ENCODE measurements at regions of chr17 and their contacts with region 1.

Region 1: GRCh38 chr17:49223517-49224197 is 6.9 kb downstream of the PHOSPHO1 start:
- DNase-seq: peak; percentile 37 to 84 (median 71)
- ATAC-seq: peak; percentile 19
- H3K4me3 ChIP-seq: peak overlapping the region; percentile 37 to 42
- H3K4me3 Mint-ChIP-seq: peak overlapping the region; percentile 76
- H3K27ac ChIP-seq: no peak overlapping the region
- H3K27ac Mint-ChIP-seq: peak overlapping the region; percentile 66
- H3K4me1 ChIP-seq: peaks cover 53% of the 10 kb centered on the region
- H3K4me1 Mint-ChIP-seq: peaks cover 47% of the 10 kb centered on the region
- H3K27me3 ChIP-seq: no peaks in the 10 kb centered on the region
- H3K27me3 Mint-ChIP-seq: no peaks in the 10 kb centered on the region
- CTCF ChIP-seq: peak; percentile 78

Region 2: DNA sequence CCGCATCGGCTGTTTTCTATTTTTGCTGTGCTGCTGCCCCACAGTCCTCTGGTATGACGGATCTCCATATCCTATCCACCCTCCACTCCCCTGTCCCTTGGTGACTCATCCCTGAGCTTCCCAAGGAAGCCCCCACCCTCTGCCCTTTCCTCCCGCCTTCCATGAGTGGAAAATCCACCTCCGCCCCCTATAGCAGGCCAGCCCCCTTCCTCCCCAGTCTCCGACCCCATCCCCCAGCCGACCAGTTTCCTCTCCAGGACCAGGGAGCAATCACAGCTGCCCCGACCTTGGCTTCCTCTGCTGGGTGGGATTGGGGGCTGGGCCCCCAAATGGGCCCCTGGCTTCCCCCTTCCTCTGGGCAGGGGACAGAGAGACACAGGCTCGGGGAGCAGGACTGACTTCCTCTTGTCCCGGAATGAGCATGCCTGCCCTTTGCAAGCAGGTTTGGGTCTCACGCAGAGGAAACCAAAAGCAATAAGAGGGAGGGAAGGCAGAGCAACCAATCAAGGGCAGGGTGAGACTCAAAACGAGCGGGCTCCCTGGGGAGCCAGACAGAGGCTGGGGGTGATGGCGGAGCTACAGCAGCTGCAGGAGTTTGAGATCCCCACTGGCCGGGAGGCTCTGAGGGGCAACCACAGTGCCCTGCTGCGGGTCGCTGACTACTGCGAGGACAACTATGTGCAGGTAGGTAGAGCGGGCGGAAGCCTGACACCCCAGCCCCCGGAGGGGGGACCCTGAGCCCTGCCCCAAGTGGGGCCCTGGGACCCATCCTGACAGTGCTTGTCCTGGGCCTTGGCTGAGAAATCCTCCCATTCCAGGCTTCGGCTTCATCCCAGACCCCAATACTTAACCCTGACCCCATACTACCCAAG is 13.3 kb before region 1 on chr17 and contains the starts of genes ABI3 and GNGT2:
- CTCF ChIA-PET with region 1: interaction called, 179 read pairs
- POLR2A ChIA-PET with region 1: interaction called, 9 read pairs
- intact Hi-C with region 1: loop called (anchors 1 kb)
- DNase-seq: peak in 7 of 9 experiments; percentile 43 to 86 (median 69)
- ATAC-seq: peak; percentile 80
- H3K4me3 ChIP-seq: peak within 1 kb of the TSS; percentile 86 to 87
- H3K4me3 Mint-ChIP-seq: peak within 1 kb of the TSS; percentile 95
- H3K27ac ChIP-seq: peak within 1 kb of the TSS; percentile 61 to 63
- H3K27ac Mint-ChIP-seq: peak within 1 kb of the TSS; percentile 91
- H3K4me1 ChIP-seq: peaks cover 78% of the 10 kb centered on the region
- H3K4me1 Mint-ChIP-seq: peaks cover 71% of the 10 kb centered on the region
- H3K27me3 ChIP-seq: no peaks in the 10 kb centered on the region
- H3K27me3 Mint-ChIP-seq: no peaks in the 10 kb centered on the region
- CTCF ChIP-seq: no peak
- total RNA-seq, gene ABI3: 12.8 to 13.6 TPM
- total RNA-seq, gene GNGT2: 3.7 to 4.1 TPM

Region 3: GRCh38 chr17:49260011-49260921 is 36.6 kb after region 1 on chr17:
- CTCF ChIA-PET with region 1: no interaction called
- POLR2A ChIA-PET with region 1: no interaction called
- intact Hi-C with region 1: no loop called
- DNase-seq: peak in 8 of 9 experiments; percentile 13 to 69 (median 48)
- ATAC-seq: peak; percentile 74
- H3K4me3 ChIP-seq: peak overlapping the region; percentile 58 to 66
- H3K4me3 Mint-ChIP-seq: peak overlapping the region; percentile 85
- H3K27ac ChIP-seq: no peak overlapping the region
- H3K27ac Mint-ChIP-seq: no peak overlapping the region
- H3K4me1 ChIP-seq: peaks cover 9% of the 10 kb centered on the region
- H3K4me1 Mint-ChIP-seq: peaks cover 8% of the 10 kb centered on the region
- H3K27me3 ChIP-seq: no peaks in the 10 kb centered on the region
- H3K27me3 Mint-ChIP-seq: peaks cover 13% of the 10 kb centered on the region
- CTCF ChIP-seq: no peak

Measured in CD8-positive, alpha-beta T cell (primary cell).